IMR-90 (cell line): ENCODE measurements at regions of chr13 and their contacts with region 1.

Region 1: DNA sequence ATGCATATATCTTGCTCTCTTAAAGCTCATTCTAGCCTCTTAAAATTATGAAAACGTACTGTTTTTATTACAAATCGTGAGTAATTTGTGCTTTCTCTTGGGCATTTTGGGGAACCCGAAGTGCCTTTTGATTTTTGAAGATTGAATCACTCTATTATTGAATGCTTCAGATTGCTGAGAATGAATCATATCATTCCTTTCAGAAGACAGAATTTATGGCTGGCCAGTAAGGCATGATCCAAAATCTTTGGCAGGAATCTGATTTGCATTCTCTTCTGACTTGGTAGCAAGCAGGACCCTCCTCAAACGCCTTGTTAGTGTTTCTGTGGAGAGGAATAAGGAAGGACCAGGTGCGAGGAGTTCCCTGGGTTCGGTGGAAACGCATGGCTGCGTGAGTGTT is 49.5 kb downstream of the STARD13 start:
- DNase-seq: peak; percentile 80
- ATAC-seq: peak; percentile 70
- H3K4me3 ChIP-seq: no peak overlapping the region
- H3K27ac ChIP-seq: peak overlapping the region; percentile 91
- H3K4me1 ChIP-seq: peaks cover 20% of the 10 kb centered on the region
- H3K27me3 ChIP-seq: no peaks in the 10 kb centered on the region
- CTCF ChIP-seq: no peak
- POLR2A ChIP-seq: no peak
- RAD21 ChIP-seq: no peak

Region 2: GRCh38 chr13:33251131-33251661 is 15.2 kb after region 1 on chr13:
- CTCF ChIA-PET with region 1: no interaction called
- POLR2A ChIA-PET with region 1: no interaction called
- dilution Hi-C with region 1: no loop called
- in situ Hi-C with region 1: no loop called
- intact Hi-C with region 1: loop called (anchors 2 kb)
- DNase-seq: peak; percentile 99
- ATAC-seq: peak; percentile 82
- H3K4me3 ChIP-seq: no peak overlapping the region
- H3K27ac ChIP-seq: peak overlapping the region; percentile 1; the same call in 1 of the 2 replicates
- H3K4me1 ChIP-seq: peaks cover 15% of the 10 kb centered on the region
- H3K27me3 ChIP-seq: no peaks in the 10 kb centered on the region
- CTCF ChIP-seq: no peak
- POLR2A ChIP-seq: no peak
- RAD21 ChIP-seq: no peak

Region 3: DNA sequence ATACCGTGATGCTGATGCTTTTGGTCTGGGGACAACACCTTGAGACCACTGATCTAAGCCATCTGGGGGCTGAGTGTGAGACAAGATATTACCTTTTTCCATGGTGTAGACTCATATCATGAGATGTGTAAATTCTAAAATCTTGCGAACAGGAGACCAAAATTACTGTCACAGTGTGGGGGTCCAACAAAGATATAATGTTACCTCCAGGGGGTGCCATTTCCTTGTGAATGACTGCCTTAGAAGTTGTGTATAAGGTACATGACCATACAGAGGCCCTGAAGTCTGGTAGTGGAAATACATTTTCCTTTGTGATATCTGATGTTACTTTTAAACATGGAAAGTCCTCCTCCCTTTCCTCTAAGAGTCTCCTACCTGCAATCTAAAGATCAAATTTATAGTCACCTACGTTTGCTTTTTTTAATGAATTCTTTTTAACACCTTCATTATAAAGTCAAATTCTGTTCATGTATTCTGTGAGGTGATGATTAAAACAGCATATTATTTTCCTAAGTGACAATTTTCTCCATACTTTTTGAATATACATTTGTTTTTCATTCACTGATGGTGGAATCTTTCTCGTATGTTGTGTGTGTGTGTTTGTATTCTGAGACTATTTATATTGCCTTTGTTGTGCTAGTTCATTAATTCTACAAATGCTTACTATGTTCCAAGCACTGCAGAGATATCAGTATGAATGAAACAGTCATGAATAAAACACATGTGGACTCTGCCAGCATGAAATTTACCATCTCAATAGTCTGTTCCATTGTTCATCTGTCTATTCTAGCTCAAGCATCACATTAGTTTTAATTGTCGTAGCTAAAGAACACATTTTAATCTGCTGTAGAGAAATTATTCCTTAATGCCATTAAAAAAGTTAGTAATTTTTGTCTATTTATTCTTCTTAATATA is 695.6 kb after region 1 on chr13:
- CTCF ChIA-PET with region 1: no interaction called
- POLR2A ChIA-PET with region 1: no interaction called
- dilution Hi-C with region 1: no loop called
- in situ Hi-C with region 1: no loop called
- intact Hi-C with region 1: no loop called
- DNase-seq: peak; percentile 53
- ATAC-seq: peak; percentile 90
- H3K4me3 ChIP-seq: no peak overlapping the region
- H3K27ac ChIP-seq: no peak overlapping the region
- H3K4me1 ChIP-seq: no peaks in the 10 kb centered on the region
- H3K27me3 ChIP-seq: no peaks in the 10 kb centered on the region
- CTCF ChIP-seq: peak; percentile 59
- POLR2A ChIP-seq: no peak
- RAD21 ChIP-seq: peak; percentile 80

Region 4: GRCh38 chr13:34833562-34834182 is 1597.7 kb after region 1 on chr13:
- CTCF ChIA-PET with region 1: no interaction called
- POLR2A ChIA-PET with region 1: no interaction called
- dilution Hi-C with region 1: no loop called
- in situ Hi-C with region 1: no loop called
- intact Hi-C with region 1: no loop called
- DNase-seq: peak; percentile 2
- ATAC-seq: no peak; the same call in 1 of the 2 replicates
- H3K4me3 ChIP-seq: no peak overlapping the region
- H3K27ac ChIP-seq: no peak overlapping the region
- H3K4me1 ChIP-seq: no peaks in the 10 kb centered on the region
- H3K27me3 ChIP-seq: no peaks in the 10 kb centered on the region
- CTCF ChIP-seq: no peak
- POLR2A ChIP-seq: no peak
- RAD21 ChIP-seq: no peak